A673 (cell line): ENCODE measurements at regions of chr11 and their contacts with region 1.

Region 1: DNA sequence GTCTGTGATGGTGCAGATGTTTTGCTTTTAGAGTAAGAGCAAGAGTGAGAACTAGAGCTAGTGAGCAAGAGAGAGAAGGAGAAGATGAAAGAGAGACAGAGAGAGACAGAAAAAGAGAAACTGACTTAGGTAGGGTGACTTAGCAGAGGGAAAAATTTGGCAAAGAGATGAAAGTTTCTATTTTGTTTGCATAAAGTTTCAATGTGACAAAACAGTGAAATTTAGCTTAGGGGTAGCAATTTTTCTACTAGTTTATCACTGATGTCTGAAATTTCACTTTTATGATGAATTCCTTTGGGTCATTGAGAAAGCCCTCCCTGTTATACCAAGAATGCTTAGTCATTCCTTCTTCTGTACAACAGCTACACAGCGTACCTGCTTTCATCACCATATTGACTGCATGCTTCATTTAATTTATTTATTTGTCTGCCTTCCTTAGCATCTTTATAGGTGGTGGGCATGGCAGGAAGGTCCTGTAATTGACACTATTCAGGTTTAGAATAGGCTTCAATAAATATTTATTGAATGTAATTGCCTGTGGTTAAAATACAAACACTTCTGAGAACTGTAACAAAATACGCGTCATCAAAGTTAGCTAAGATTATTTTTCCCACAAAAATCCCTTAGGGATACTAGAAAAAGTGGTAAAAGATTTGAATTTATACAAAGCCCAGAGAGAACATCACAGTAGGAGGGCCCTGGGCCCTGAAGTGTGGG is 19.9 kb upstream of the CTSC start:
- DNase-seq: peak; percentile 42
- H3K4me3 ChIP-seq: no peak overlapping the region
- H3K27ac ChIP-seq: peak overlapping the region; percentile 31
- H3K4me1 ChIP-seq: peaks cover 15% of the 10 kb centered on the region
- H3K27me3 ChIP-seq: no peaks in the 10 kb centered on the region
- CTCF ChIP-seq: no peak

Region 2: GRCh38 chr11:88447281-88447680 is 89.8 kb after region 1 on chr11:
- CTCF ChIA-PET with region 1: no interaction called
- POLR2A ChIA-PET with region 1: interaction called, 12 read pairs
- intact Hi-C with region 1: no loop called
- DNase-seq: no peak
- H3K4me3 ChIP-seq: no peak overlapping the region
- H3K27ac ChIP-seq: no peak overlapping the region
- H3K4me1 ChIP-seq: no peaks in the 10 kb centered on the region
- H3K27me3 ChIP-seq: peaks cover 4% of the 10 kb centered on the region
- CTCF ChIP-seq: no peak

Region 3: DNA sequence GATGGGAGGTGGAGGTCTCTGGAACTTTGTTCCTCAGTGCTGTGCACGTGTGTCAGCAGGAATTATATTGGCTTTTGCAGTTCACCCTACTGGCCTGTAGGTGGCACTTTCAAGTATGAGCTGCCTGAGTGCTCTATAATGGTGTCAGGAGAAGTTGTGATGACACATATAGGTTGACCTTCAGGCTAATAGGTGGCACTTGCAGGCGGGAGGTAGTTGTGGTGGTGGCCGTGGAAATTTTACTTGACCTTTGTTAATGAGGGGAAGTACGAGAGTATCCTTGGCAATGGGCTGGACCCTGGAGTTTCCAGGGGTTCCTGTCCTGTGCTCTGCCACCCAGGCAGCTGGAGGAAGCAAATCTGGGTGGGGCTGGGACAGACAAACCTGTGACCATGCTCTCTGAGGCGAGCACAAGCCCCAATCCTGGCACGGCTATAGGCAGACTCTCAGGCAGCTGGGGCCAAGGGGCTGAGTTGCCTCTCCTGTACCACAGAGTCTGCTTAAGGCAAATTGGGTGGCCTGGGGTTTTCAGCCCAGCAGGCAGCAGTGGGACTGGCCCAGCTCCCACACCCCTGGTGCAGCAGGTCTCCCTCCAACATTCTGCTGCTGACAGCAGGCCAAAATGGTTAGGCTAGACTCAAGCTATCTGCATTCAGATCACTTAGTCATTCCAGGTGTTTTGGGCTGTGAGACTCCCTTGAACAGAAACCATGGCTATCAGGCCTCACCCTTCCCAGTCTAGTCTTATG is 127.6 kb after region 1 on chr11:
- CTCF ChIA-PET with region 1: no interaction called
- POLR2A ChIA-PET with region 1: no interaction called
- intact Hi-C with region 1: no loop called
- DNase-seq: peak; percentile 68
- H3K4me3 ChIP-seq: no peak overlapping the region
- H3K27ac ChIP-seq: no peak overlapping the region
- H3K4me1 ChIP-seq: no peaks in the 10 kb centered on the region
- H3K27me3 ChIP-seq: no peaks in the 10 kb centered on the region
- CTCF ChIP-seq: peak; percentile 91